BJ (cell line): ENCODE measurements at regions of chr1 and their contacts with region 1.

Region 1: DNA sequence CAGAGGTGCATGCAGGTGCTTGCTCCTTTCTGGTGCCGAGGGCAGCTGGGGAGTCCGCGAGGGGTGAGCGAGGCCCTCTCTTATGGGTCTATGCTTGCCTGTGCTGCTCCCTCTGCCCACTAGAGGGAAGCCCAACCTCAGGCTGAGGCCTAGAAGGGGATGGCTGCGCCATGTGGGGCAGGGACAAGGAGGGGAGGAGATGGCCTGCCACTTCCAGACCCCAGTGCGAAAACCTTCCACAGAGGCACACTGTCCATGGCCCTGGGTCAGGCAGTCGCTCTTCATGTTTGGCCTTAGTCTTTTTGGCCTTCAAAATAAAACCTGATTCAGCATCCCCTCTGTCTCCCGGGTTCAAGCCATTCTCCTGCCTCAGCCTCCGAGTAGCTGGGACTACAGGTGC is 14.0 kb downstream of the RHBG start:
- DNase-seq: no peak
- H3K4me3 ChIP-seq: no peak overlapping the region
- H3K27me3 ChIP-seq: peaks cover 12% of the 10 kb centered on the region
- CTCF ChIP-seq: peak; percentile 93

Region 2: DNA sequence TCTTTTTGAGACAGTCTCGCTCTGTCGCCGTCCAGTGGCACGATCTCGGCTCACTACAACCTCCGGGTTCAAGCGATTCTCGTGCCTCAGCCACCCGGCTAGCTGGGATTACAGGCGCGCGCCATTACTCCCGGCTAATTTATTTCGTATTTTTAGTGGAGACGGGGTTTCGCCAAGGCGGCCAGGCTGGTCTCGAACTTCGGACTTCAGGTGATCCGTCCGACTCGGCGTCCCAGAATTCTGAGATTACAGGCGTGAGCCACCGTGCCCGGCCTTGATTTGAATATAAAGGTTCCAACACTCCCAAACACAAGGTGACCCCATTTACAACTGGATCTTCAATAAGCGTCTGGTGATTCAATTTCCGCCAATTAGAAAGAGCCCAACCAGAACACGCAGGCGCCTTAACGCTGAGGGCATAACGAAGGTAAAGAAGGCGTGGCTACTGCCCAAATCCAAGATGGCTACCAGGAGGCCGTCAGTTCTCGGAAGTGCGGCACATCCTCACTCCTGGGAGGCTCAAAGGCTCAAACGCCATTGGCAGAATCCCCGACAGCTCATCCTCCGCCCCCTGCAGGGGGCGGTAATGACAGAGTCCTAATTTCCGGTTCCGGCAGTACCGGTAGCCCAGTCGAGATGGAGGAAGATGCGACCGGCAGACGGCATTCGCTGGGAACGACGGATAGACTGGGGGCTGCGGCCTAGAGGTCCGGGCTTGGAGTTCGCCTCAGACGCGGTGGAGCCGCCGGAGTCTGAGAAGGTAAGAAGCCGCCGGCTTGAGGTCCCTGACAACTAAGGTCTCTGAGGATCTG is 189.3 kb before region 1 on chr1 and contains the start of gene SLC25A44:
- CTCF ChIA-PET with region 1: no interaction called
- POLR2A ChIA-PET with region 1: no interaction called
- DNase-seq: peak; percentile 96
- H3K4me3 ChIP-seq: peak within 1 kb of the TSS; percentile 65
- H3K27me3 ChIP-seq: no peaks in the 10 kb centered on the region
- CTCF ChIP-seq: peak; percentile 63
- polyA plus RNA-seq, gene SLC25A44: 21.4 and 25.8 TPM in 2 replicates

Region 3: GRCh38 chr1:156371553-156372264 is 11.3 kb before region 1 on chr1:
- CTCF ChIA-PET with region 1: interaction called, 25 read pairs
- POLR2A ChIA-PET with region 1: no interaction called
- DNase-seq: no peak
- H3K4me3 ChIP-seq: no peak overlapping the region
- H3K27me3 ChIP-seq: peaks cover 15% of the 10 kb centered on the region
- CTCF ChIP-seq: no peak

Region 4: DNA sequence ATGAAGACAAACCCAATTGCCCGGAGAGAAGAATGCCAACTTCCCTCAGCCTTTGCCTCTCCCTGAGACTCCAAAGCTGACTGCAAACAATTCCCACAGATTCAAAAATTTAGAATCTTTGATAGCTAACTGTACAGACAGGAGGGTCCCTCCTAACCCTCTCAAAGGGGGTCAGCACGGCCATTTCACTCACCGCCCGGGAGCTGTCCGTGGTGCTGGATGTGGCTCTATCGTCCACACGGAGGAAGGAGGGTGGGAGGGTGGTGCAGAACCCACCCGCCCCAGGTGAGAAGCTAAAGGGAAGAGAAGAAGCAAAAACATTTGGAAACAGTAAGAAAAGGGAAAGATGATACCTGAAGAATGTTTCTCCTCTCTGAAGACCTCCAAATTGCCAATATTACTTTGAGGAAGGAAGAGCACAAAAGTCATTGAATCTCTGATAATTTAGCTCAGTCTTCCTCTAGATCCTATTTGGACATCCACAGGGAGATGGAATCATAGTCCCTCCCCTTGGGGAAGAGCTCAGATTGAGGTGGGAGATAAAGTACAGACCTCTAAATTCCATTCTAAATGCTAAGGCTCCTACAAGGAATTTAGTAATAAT is 31.5 kb after region 1 on chr1:
- CTCF ChIA-PET with region 1: interaction called, 13 read pairs
- POLR2A ChIA-PET with region 1: no interaction called
- DNase-seq: no peak
- H3K4me3 ChIP-seq: no peak overlapping the region
- H3K27me3 ChIP-seq: peaks cover 21% of the 10 kb centered on the region
- CTCF ChIP-seq: no peak

Region 5: GRCh38 chr1:156445789-156446263 is 62.8 kb after region 1 on chr1:
- CTCF ChIA-PET with region 1: interaction called, 172 read pairs
- POLR2A ChIA-PET with region 1: interaction called, 4 read pairs
- DNase-seq: peak; percentile 13
- H3K4me3 ChIP-seq: no peak overlapping the region
- H3K27me3 ChIP-seq: peaks cover 33% of the 10 kb centered on the region
- CTCF ChIP-seq: peak; percentile 98

Region 6: DNA sequence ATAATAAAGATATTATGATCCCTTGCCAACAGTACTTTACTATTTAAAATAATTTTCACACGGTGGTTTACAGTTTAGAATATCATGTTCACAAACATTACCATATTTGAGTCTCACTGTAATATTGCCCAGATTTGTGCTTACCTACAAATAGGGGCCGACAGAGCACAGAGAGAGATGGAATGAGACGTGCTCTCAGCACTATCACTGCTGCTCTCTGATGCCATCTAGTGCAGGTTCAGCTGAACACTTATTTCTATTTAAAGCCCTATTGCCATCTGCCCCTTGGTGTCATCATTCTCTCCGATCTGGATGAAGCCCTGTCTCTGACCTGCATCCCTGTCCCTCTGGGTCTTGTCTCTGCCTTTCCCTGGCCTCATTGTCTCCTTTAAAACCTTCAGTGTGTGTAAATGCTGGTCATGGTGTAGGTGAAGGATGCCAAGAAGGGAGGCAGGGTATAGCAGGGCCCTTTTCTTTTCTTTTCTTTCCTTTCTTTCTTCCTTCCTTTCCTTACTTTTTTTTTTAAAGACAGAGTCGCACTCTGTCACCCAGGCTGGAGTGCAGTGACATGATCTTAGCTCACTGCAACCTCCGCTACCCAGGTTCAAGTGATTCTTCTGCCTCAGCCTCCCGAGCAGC is 225.1 kb after region 1 on chr1:
- CTCF ChIA-PET with region 1: interaction called, 103 read pairs
- POLR2A ChIA-PET with region 1: no interaction called
- DNase-seq: no peak
- H3K4me3 ChIP-seq: no peak overlapping the region
- H3K27me3 ChIP-seq: peaks cover 11% of the 10 kb centered on the region
- CTCF ChIP-seq: peak; percentile 85

Region 7: GRCh38 chr1:156659994-156660751 is 277.1 kb after region 1 on chr1:
- CTCF ChIA-PET with region 1: interaction called, 13 read pairs
- POLR2A ChIA-PET with region 1: no interaction called
- DNase-seq: peak; percentile 85
- H3K4me3 ChIP-seq: no peak overlapping the region
- H3K27me3 ChIP-seq: peaks cover 18% of the 10 kb centered on the region
- CTCF ChIP-seq: peak; percentile 100